BJ (cell line): ENCODE measurements at regions of chr9 and their contacts with region 1.

Region 1: GRCh38 chr9:34072868-34073590 is 24.3 kb upstream of the UBAP2 start:
- DNase-seq: peak; percentile 60
- H3K4me3 ChIP-seq: no peak overlapping the region
- H3K27me3 ChIP-seq: no peaks in the 10 kb centered on the region
- CTCF ChIP-seq: no peak

Region 2: GRCh38 chr9:33430942-33431341 is 642.1 kb before region 1 on chr9:
- CTCF ChIA-PET with region 1: no interaction called
- POLR2A ChIA-PET with region 1: no interaction called
- DNase-seq: no peak
- H3K4me3 ChIP-seq: no peak overlapping the region
- H3K27me3 ChIP-seq: peaks cover 3% of the 10 kb centered on the region
- CTCF ChIP-seq: no peak

Region 3: DNA sequence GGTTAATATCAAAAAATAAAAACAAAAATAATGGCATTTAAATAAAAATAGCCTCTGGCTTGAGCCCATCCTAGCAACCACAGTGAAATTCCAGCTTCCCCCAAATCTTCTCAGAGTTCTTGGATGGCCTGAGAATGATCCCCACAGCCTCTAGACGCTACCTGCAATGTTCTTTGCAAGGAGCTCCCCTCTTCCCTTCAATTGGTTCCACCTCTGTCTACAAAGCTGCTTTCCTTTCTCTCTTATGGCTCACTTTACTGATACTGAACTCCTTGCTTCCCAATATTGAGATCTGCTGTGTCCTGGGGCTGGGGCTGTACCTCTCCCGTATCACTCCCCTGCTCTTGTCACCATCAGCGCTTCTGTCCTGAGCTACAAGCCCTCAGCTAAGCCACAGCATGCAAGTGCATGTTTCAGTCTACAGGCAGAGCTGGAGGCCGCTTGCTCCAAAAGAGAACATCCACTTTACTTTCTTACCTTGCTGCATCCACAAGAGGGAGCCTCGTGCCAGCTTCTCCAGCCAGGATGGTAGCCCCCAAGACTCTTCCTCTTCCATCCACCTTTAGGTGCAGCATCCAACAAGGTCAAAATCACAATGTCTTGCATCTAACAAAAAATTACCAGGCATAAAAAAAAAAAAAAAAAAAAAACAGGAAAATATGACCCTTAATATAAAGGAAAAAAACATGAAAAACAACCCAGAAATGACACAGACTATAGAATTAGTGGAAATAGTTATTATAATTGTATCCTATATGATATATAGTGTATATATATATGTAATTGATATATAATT is 335.0 kb before region 1 on chr9:
- CTCF ChIA-PET with region 1: interaction called, 13 read pairs
- POLR2A ChIA-PET with region 1: no interaction called
- DNase-seq: no peak
- H3K4me3 ChIP-seq: no peak overlapping the region
- H3K27me3 ChIP-seq: no peaks in the 10 kb centered on the region; the same call in 1 of the 2 replicates
- CTCF ChIP-seq: peak; percentile 89

Region 4: DNA sequence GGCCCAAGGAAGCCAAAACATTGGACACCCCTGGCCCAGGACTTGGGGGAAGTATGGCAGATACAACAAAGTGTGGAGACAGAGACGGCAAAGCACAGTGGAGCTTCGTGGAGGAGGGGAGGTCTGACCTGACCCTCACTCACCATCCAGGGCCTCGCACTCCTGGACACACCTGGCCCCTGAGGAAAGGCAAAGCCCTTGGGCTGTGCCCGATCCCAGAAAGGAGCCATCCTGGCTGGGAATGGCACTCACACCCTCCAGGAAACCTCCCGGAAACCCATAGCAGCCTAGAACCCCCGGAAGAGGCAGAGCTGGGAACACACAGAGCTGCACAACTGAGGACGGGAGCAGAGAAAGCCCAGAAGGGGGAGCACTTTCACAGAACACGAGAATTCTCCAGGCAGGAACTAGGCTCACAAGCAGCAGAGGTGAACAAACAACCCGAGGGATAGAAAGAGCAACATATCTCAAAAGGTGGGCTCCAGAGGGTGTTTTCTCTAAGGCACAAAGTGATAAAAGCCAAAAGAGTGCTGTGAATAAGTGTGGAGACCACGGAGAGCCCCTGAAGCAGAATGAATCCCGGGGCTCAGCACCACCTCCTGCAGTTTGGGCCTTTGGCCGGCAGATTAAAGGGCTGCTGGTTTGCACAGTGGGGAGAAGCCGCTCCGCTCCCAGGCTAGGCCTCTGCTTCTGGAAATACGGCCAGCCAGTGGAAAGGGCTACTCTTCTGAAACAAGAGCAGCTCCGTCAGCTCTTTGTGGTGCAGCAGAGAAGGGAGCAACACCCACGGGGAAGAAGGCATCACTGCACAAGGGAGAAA is 147.8 kb before region 1 on chr9:
- CTCF ChIA-PET with region 1: interaction called, 36 read pairs
- POLR2A ChIA-PET with region 1: no interaction called
- DNase-seq: no peak
- H3K4me3 ChIP-seq: no peak overlapping the region
- H3K27me3 ChIP-seq: no peaks in the 10 kb centered on the region
- CTCF ChIP-seq: peak; percentile 72

Region 5: DNA sequence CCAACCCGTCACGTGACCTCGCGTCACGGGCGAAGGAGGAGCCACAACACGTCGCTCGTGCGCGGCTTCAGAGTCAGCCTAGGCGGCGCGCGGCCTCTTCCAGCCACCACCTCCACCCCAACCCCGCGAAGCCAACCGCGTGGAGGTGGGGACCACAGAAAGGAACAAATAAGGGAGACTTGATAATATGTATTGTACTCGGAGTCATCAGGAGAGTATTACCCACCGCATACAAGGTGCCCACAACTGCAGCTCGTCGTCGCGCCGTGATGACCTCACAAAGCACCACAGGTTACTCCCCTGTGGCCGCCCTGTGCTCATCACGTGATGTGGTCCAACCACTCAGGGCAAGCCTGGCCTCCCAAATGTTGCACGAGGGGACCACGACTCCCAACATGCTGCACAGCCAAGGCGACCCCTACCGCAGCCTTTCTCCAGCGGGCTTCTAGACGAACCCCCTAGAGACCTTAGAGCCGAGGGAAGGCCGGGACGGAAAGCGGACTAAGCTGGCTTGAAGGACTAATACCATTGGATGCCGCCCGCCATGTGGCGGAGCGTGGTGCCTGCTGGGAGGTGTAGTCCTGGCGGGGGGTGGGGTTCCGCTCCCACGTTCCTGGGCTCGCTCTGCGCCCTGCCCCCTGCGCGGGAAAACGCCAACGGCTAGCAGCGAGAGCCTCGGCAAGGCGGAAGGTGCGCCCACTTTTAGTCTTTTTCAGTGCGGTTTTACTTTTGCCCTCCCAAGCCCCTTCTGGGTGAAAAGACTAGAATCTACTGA is 23.9 kb before region 1 on chr9:
- CTCF ChIA-PET with region 1: interaction called, 11 read pairs
- POLR2A ChIA-PET with region 1: interaction called, 4 read pairs
- DNase-seq: peak; percentile 82
- H3K4me3 ChIP-seq: peak overlapping the region; percentile 71
- H3K27me3 ChIP-seq: no peaks in the 10 kb centered on the region
- CTCF ChIP-seq: peak; percentile 19; the same call in 1 of the 2 replicates

Region 6: DNA sequence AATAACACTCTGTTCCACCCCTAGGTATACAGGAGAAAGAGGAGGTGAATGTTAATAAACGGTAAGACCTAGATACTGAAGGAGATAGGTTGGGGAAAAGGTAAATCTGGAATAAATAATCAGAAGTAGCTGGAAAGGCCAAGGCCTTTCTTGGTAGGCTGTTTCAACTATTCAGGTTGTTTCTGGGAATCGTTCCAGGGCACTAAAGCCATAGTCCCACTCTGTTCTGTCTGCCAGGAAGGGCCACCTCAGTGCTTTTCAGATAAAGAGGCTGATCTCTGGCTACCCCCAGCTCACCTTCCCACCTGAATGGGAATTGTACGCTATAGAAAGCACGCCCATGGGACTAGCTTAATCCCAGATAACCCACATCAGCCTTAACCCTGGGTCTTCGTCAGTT is 20.5 kb after region 1 on chr9:
- CTCF ChIA-PET with region 1: interaction called, 11 read pairs
- POLR2A ChIA-PET with region 1: no interaction called
- DNase-seq: no peak
- H3K4me3 ChIP-seq: no peak overlapping the region
- H3K27me3 ChIP-seq: no peaks in the 10 kb centered on the region
- CTCF ChIP-seq: no peak